ENCODE measurements at regions of chr15 and their contacts with region 1.

Region 1: DNA sequence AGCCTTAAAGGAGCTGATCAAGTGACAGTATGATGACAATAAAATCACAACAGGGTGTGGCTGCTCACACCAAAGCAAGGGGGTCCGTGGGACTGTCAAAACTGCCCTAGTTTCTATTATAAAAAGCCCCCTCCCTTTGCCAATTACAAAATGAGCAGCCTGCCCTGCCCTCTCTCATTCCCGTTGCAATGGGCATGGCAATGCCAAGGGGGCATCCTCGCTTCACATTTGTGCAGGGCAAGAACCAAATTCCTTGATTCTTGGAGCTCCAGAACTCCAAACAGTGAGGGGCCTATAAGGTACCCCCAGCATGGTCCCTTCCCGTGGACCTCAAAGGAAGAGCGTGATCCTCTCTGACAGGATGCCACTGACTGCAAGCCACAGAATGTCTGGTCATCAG is 104.9 kb upstream of the TRPM1 start:
- DNase-seq: peak in 7 of 42 donors; percentile 9 to 48 (median 31)

Region 2: DNA sequence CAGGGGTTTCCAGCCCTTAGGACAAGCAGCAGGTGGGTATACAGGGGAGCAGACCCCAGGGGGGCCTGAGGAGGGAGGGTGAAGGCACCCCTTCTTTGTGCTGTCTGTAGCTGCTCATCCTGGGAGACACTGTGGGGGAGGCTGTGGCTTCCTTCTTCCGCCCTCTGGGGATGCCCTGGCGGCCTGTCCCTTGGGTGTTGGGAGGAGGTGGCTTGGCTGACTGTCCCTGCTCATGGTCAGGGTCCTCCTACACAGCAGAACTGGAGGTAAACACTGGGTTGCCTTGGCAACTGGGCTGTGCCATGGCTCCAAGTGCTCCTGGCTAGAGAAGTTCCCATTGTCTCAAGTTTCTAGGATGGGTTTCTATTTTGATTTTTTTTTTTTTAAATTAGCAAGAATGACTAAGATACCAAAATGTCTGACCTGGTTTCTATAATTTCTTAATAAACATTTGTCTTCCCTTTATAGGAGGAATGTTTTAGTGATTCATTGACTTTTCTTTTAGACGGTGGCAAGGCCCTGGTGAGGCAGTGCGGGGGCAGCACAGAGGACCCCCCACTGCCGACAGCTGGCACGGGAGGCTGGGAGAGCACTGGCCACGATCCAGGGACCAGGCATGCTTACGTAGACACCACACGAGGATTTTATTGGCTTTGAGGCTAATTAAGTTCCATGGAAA is 132.6 kb after region 1 on chr15:
- intact Hi-C with region 1: no loop called
- DNase-seq: peak in 25 of 42 donors; percentile 32 to 72 (median 53)

Region 3: DNA sequence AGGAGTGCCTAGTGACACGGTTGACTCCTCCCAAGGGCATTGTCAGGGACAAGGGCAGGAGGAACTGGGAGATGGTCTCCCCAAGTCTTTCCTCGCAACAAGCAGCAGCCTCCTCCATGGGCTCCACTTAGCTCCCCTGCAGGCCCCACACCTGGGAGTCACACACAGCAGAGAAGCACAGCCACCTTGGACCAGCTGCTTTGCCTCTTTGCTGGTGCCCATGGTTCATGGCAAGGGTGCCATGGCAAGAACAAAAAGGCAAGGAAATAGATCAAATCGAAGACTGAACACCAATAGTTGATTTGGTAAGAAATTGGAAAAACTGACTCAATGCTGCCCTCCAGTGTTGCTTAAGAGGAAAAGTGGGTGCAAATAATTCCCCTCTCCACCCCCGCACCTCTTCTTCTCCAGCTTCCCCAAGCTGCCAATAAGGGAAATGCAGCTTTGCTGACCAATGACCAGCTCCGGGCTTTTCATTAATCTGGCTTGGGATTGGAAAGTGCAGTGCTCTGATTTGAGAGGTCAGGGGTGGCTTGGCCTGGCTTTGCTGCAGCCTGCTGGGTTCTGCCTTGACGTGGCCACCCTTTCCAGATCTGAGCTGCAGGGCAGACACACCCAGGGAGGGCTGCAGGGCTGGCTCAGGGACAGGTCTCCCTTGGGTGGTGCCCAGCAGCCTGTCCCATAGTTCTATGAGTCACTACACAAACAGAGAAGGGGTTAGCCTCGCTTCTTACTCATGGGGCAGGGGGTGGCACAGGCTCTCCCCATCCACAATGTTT is 282.2 kb after region 1 on chr15:
- intact Hi-C with region 1: loop called (anchors 5 kb)
- DNase-seq: peak in 30 of 42 donors; percentile 9 to 82 (median 60)

Measured in head of caudate nucleus (tissue), 42 donors.